Ovary (tissue), 10 donors: ENCODE measurements at regions of chr12 and their contacts with region 1.

Region 1: GRCh38 chr12:119115296-119115905 is 63.3 kb upstream of the HSPB8 start:
- DNase-seq: peak in 2 of 5 donors; percentile 17 to 49
- H3K4me3 ChIP-seq: no peak overlapping the region
- H3K27ac ChIP-seq: no peak overlapping the region
- H3K4me1 ChIP-seq: no peaks in the 10 kb centered on the region
- H3K27me3 ChIP-seq: no peaks in the 10 kb centered on the region
- CTCF ChIP-seq: peak; percentile 62 to 80 (median 71)
- EP300 ChIP-seq: no peak
- POLR2A ChIP-seq: no peak

Region 2: GRCh38 chr12:118581371-118581770 is 534.0 kb before region 1 on chr12:
- intact Hi-C with region 1: no loop called
- DNase-seq: no peak
- H3K4me3 ChIP-seq: no peak overlapping the region
- H3K27ac ChIP-seq: no peak overlapping the region
- H3K4me1 ChIP-seq: no peaks in the 10 kb centered on the region
- H3K27me3 ChIP-seq: no peaks in the 10 kb centered on the region
- CTCF ChIP-seq: no peak
- EP300 ChIP-seq: no peak
- POLR2A ChIP-seq: no peak

Region 3: GRCh38 chr12:119412811-119413794 is 297.7 kb after region 1 on chr12:
- intact Hi-C with region 1: loop called (anchors 2 to 10 kb)
- DNase-seq: peak; percentile 18 to 57 (median 53)
- H3K4me3 ChIP-seq: no peak overlapping the region
- H3K27ac ChIP-seq: no peak overlapping the region
- H3K4me1 ChIP-seq: no peaks in the 10 kb centered on the region
- H3K27me3 ChIP-seq: no peaks in the 10 kb centered on the region
- CTCF ChIP-seq: peak in 2 of 3 donors; percentile 44 to 61
- EP300 ChIP-seq: no peak
- POLR2A ChIP-seq: no peak

Region 4: GRCh38 chr12:119544765-119545625 is 429.6 kb after region 1 on chr12:
- intact Hi-C with region 1: loop called in 1 of 4 experiments (anchors 5 kb)
- DNase-seq: peak; percentile 28 to 56 (median 37)
- H3K4me3 ChIP-seq: no peak overlapping the region
- H3K27ac ChIP-seq: no peak overlapping the region
- H3K4me1 ChIP-seq: no peaks in the 10 kb centered on the region
- H3K27me3 ChIP-seq: no peaks in the 10 kb centered on the region
- CTCF ChIP-seq: peak; percentile 48 to 61 (median 53)
- EP300 ChIP-seq: no peak
- POLR2A ChIP-seq: no peak